GM13977 (cell line): ENCODE measurements at regions of chr12 and their contacts with region 1.

Region 1: DNA sequence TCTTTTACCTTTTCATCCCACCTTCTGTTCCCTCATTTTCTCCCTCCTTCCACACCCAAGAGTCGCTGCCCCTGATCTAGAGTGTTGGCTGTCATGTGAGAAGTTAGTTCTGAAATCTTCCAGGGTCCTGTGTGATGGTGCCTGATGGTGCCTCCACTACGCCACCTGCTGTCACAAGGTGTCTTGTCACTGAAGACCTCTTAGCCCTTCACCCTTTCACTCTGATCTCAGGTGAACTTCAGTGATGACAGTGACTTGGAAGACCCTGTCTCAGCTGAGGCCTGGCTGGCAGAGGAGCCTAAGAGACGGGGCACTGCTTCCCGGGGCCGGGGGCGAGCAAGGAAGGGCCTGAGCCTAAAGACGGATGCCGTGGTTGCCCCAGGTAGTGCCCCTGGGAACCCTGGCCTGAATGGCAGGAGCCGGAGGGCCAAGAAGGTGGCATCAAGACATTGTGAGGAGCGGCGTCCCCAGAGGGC is 7.6 kb upstream of the PFDN5 start:
- DNase-seq: peak; percentile 81
- CTCF ChIP-seq: peak; percentile 71

Region 2: GRCh38 chr12:53219968-53220800 is 67.6 kb before region 1 on chr12:
- in situ Hi-C with region 1: loop called (anchors 5 kb)
- DNase-seq: peak; percentile 94
- CTCF ChIP-seq: no peak